Activated CD4-positive, alpha-beta T cell treated with anti-CD3 and anti-CD28 coated beads, Interleukin-2, amount 10 ng/mL, durations not matched to agents 24 days and 14 days (primary cell): ENCODE measurements at regions of chr3 and their contacts with region 1.

Region 1: DNA sequence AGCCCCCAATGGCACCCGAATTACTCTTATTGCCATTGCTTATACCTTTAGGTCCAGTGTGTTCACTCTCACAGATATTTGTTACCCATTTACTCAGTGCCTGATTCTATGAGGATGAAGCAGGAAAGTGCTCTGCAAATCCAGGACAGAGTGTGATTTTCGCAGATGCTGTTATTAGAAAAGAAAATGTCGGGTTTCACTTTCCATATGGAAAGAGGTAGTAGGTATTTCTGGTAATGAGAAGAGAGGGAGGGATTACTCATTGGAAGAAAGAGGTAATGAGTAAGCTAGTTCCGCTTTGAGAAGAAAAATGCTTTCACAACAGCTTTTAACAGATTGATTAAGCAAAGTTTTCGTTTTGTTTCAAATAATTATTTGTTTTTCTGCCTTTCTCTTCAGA is 336.3 kb upstream of the CFAP20DC start:
- DNase-seq: no peak
- H3K4me3 Mint-ChIP-seq: peak overlapping the region; percentile 31
- H3K27ac Mint-ChIP-seq: peak overlapping the region; percentile 98
- H3K4me1 Mint-ChIP-seq: peaks cover 85% of the 10 kb centered on the region
- H3K27me3 Mint-ChIP-seq: no peaks in the 10 kb centered on the region

Region 2: DNA sequence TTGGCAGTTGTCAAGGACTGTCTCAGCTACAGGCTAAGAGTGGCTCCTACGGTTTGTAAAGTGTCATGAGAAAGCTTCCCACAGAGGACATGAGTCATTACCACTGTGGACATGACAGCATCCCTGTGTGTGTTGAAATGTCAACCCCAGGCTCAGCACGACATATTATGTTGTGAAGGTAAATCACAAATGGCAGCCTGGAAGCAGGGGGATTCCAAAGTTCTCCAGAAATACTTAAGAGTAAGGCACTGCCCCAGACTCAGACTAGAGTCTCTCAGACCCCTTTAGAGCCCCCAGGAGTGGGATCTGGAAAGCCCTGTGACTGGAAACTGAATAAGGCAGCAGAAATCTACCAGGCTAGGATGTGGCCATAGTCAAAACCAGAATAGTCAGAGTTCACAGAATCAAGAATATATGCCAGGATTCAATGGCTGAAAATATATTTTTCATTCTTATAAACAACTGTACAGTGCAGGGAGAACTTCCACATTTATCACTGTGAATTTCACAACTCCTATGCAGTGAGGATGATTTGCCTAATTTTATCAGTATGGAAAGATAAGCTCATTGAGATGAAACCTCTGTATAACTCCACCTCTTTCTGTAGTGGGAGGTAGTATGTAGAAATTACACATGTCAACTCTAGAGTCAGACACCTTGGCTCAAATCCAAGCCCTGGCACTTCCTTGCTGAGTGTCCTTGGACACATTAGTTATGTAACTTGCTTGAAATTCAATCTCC is 99.2 kb before region 1 on chr3:
- intact Hi-C with region 1: loop called (anchors 1 kb)
- DNase-seq: peak; percentile 74
- H3K4me3 Mint-ChIP-seq: peak overlapping the region; percentile 55
- H3K27ac Mint-ChIP-seq: peak overlapping the region; percentile 94
- H3K4me1 Mint-ChIP-seq: peaks cover 32% of the 10 kb centered on the region
- H3K27me3 Mint-ChIP-seq: no peaks in the 10 kb centered on the region

Region 3: GRCh38 chr3:59450946-59451763 is 65.0 kb after region 1 on chr3:
- intact Hi-C with region 1: loop called (anchors 1 kb)
- DNase-seq: peak; percentile 93
- H3K4me3 Mint-ChIP-seq: peak overlapping the region; percentile 65
- H3K27ac Mint-ChIP-seq: peak overlapping the region; percentile 94
- H3K4me1 Mint-ChIP-seq: peaks cover 65% of the 10 kb centered on the region
- H3K27me3 Mint-ChIP-seq: no peaks in the 10 kb centered on the region

Region 4: GRCh38 chr3:59559721-59560435 is 173.7 kb after region 1 on chr3:
- intact Hi-C with region 1: loop called (anchors 1 kb)
- DNase-seq: no peak
- H3K4me3 Mint-ChIP-seq: peak overlapping the region; percentile 1
- H3K27ac Mint-ChIP-seq: peak overlapping the region; percentile 89
- H3K4me1 Mint-ChIP-seq: peaks cover 25% of the 10 kb centered on the region
- H3K27me3 Mint-ChIP-seq: no peaks in the 10 kb centered on the region

Region 5: DNA sequence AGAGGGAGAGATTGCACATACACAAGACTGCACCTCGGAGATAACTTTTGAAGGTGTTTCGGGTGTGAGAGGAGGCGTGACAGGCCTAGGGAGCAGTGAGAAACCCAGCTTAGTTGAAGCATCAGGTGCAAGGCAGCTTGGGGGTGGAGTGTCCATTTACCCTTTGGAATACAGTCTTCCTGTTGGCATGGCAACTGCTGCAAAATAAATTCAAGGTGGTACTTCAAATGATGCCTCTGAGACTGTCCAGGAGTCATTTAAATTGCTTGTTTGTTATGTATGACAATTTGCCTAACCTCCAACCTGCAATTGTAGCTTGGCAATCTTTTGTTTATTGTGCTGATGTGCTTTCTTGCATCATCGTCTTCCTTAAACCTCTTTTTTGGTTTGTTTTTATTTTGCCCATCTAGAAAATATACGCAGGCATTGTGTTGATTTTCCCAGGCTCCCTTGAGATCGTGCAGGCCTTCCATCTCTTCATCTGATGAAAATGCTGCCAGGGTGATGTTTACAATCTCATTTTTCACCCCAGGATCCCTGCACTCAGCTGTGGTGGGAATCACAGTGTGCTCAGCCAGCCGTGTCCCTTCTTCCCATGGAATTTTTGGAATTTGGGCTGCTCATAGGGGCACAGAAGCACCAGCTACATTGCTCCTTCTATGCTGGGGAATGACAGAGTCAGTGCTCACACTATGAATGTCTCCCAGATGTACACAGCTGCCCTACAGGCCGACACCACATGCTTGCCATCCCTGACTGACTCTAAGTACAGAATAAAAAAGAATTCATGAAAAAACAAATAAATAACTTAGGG is 246.8 kb after region 1 on chr3:
- intact Hi-C with region 1: no loop called
- DNase-seq: no peak
- H3K4me3 Mint-ChIP-seq: no peak overlapping the region
- H3K27ac Mint-ChIP-seq: no peak overlapping the region
- H3K4me1 Mint-ChIP-seq: peaks cover 2% of the 10 kb centered on the region
- H3K27me3 Mint-ChIP-seq: no peaks in the 10 kb centered on the region

Region 6: DNA sequence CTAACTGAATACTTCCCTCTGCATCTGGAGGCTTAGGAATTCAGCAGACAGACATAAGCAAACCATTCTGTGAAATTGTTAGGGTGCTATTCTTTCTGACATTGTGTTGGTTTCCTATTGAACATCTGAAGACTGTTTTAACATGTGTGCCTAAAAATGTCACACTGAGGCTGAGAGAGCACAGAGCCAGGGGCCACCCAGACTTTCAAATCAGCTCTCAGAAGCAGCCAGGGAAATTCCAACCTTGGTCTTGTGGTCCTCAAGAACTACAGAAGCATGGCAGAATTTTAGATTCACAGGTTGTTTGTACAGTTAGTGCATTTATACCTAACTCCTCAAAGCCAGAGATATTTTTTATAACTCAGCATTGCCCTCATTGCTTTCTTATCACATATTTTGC is 592.8 kb after region 1 on chr3:
- intact Hi-C with region 1: loop called (anchors 2 kb)
- DNase-seq: peak; percentile 81
- H3K4me3 Mint-ChIP-seq: peak overlapping the region; percentile 78
- H3K27ac Mint-ChIP-seq: peak overlapping the region; percentile 97
- H3K4me1 Mint-ChIP-seq: peaks cover 33% of the 10 kb centered on the region
- H3K27me3 Mint-ChIP-seq: no peaks in the 10 kb centered on the region

Region 7: DNA sequence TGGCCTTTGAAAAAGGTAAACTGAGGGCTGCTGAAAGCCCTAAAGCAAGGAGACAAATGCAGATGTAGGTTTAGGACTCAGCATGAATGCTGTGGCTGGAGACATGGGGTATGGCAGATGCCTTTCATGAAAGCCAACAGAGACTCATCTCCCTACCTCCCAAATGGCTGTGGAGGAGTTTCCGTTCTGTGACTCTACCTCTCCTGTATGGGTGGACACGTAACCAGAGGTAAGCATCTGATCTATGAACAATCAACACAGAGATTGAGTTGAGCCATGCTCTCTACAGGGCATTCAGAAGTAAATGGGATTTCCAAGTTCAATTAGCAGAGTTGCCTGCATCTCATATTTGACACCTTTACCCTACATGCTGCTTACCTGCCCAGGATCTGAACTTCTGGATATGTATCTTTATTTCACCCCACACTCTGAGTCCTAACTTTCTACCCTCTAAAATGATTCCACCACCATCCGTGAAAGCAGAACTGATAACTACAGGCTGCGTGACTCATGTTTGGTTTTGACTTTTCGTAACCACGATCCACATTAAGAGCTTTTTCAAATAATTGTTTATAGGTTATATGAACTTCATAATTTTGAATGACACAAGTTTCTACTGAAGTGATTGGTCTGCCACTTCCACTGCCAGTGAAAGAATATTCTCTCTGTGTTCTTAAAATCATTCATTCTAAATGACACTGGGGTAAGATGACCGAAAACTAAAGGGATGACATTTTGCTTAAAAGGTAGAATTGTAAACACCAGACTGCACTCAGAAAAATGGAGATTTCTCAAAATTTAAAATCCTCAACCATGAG is 806.3 kb after region 1 on chr3:
- intact Hi-C with region 1: loop called (anchors 5 kb)
- DNase-seq: peak; percentile 70
- H3K4me3 Mint-ChIP-seq: peak overlapping the region; percentile 45
- H3K27ac Mint-ChIP-seq: peak overlapping the region; percentile 90
- H3K4me1 Mint-ChIP-seq: peaks cover 48% of the 10 kb centered on the region
- H3K27me3 Mint-ChIP-seq: no peaks in the 10 kb centered on the region